ENCODE measurements at regions of chr17 and their contacts with region 1.

Region 1: GRCh38 chr17:6461246-6461645 is 17.0 kb downstream of the PIMREG start:
- DNase-seq: no peak
- ATAC-seq: no peak
- H3K4me3 Mint-ChIP-seq: no peak overlapping the region
- H3K27ac Mint-ChIP-seq: no peak overlapping the region
- H3K4me1 Mint-ChIP-seq: peaks cover 25% of the 10 kb centered on the region
- H3K27me3 Mint-ChIP-seq: no peaks in the 10 kb centered on the region
- CTCF ChIP-seq: no peak

Region 2: DNA sequence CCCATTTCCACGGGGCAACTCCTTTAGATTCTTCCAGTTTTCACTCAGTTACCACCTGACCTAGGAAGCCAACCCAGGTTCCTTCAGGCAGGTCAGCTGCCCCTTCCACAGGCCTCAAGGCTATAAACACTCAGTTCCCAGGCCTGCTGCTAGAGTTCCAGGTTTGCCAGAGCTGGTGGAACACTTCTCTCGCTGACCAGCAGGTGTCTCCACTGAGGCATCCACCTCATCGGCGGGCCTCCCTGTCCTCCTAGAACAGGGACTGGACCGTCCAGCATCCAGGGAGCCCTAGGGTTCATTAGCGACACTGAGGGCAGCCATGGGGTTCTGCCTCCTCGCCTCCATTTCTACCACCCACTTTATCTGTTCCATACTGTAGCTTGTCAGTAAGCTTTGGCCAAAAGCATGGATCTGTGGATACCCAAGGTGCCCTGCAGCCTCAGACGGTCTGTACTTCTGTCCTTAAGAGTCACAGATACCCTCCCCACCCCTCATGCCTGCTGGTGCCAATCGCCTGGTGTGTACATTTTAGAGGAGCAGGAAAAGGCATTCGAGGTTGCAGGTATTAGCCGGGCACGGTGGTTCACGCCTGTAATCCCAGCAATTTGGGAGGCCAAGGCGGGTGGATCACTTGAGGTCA is 12.0 kb after region 1 on chr17:
- CTCF ChIA-PET with region 1: interaction called, 13 read pairs
- POLR2A ChIA-PET with region 1: no interaction called
- intact Hi-C with region 1: no loop called
- DNase-seq: peak; percentile 80
- ATAC-seq: peak; percentile 91
- H3K4me3 Mint-ChIP-seq: no peak overlapping the region
- H3K27ac Mint-ChIP-seq: no peak overlapping the region
- H3K4me1 Mint-ChIP-seq: no peaks in the 10 kb centered on the region
- H3K27me3 Mint-ChIP-seq: no peaks in the 10 kb centered on the region
- CTCF ChIP-seq: peak; percentile 94